CD8-positive, alpha-beta memory T cell (primary cell): ENCODE measurements at regions of chr18 and their contacts with region 1.

Region 1: GRCh38 chr18:23503038-23503962 is at the start of gene RMC1:
- DNase-seq: peak; percentile 94 to 97 (median 97)
- H3K4me3 ChIP-seq: peak within 1 kb of the TSS; percentile 92
- H3K4me3 Mint-ChIP-seq: peak within 1 kb of the TSS; percentile 86 to 98 (median 97)
- H3K27ac ChIP-seq: peak within 1 kb of the TSS; percentile 85
- H3K27ac Mint-ChIP-seq: peak within 1 kb of the TSS; percentile 91 to 96 (median 94)
- H3K4me1 ChIP-seq: peaks cover 40% of the 10 kb centered on the region
- H3K4me1 Mint-ChIP-seq: peaks cover 53 to 66% (median 60%) of the 10 kb centered on the region in 3 donors
- H3K27me3 ChIP-seq: no peaks in the 10 kb centered on the region
- H3K27me3 Mint-ChIP-seq: no peaks in the 10 kb centered on the region
- total RNA-seq, gene RMC1: 45.5 to 47.7 TPM

Region 2: GRCh38 chr18:23487738-23488570 is 15.3 kb before region 1 on chr18:
- CTCF ChIA-PET with region 1: interaction called, 12 read pairs
- POLR2A ChIA-PET with region 1: interaction called, 3 read pairs
- DNase-seq: peak in 3 of 5 donors; percentile 2 to 41 (median 3)
- H3K4me3 ChIP-seq: peak overlapping the region; percentile 29
- H3K4me3 Mint-ChIP-seq: peak overlapping the region; percentile 6 to 78 (median 68)
- H3K27ac ChIP-seq: peak overlapping the region; percentile 57
- H3K27ac Mint-ChIP-seq: peak overlapping the region; percentile 19 to 84 (median 66)
- H3K4me1 ChIP-seq: peaks cover 8% of the 10 kb centered on the region
- H3K4me1 Mint-ChIP-seq: peaks cover 14 to 20% (median 18%) of the 10 kb centered on the region in 3 donors
- H3K27me3 ChIP-seq: no peaks in the 10 kb centered on the region
- H3K27me3 Mint-ChIP-seq: no peaks in the 10 kb centered on the region

Region 3: GRCh38 chr18:23586249-23587196 is 83.2 kb after region 1 on chr18 and contains the start of gene NPC1:
- CTCF ChIA-PET with region 1: interaction called, 23 read pairs
- POLR2A ChIA-PET with region 1: interaction called, 3 read pairs
- DNase-seq: peak; percentile 90 to 94 (median 93)
- H3K4me3 ChIP-seq: peak within 1 kb of the TSS; percentile 87
- H3K4me3 Mint-ChIP-seq: peak within 1 kb of the TSS; percentile 94 to 100 (median 97)
- H3K27ac ChIP-seq: peak within 1 kb of the TSS; percentile 99
- H3K27ac Mint-ChIP-seq: peak within 1 kb of the TSS; percentile 93 to 98 (median 96)
- H3K4me1 ChIP-seq: peaks cover 40% of the 10 kb centered on the region
- H3K4me1 Mint-ChIP-seq: peaks cover 40 to 47% (median 46%) of the 10 kb centered on the region in 3 donors
- H3K27me3 ChIP-seq: no peaks in the 10 kb centered on the region
- H3K27me3 Mint-ChIP-seq: peaks cover 0 to 3% of the 10 kb centered on the region in 2 donors
- total RNA-seq, gene NPC1: 33.9 to 34.3 TPM